ENCODE measurements at regions of chr2 and their contacts with region 1.

Region 1: GRCh38 chr2:224585205-224586088 is at the start of gene CUL3:
- DNase-seq: peak; percentile 100
- ATAC-seq: peak; percentile 86
- H3K4me3 Mint-ChIP-seq: peak within 1 kb of the TSS; percentile 95
- H3K27ac Mint-ChIP-seq: peak within 1 kb of the TSS; percentile 96
- H3K4me1 Mint-ChIP-seq: peaks cover 29% of the 10 kb centered on the region
- H3K27me3 Mint-ChIP-seq: no peaks in the 10 kb centered on the region
- total RNA-seq, gene CUL3: 77.6 to 85.8 TPM

Region 2: GRCh38 chr2:224025874-224026273 is 559.6 kb before region 1 on chr2:
- CTCF ChIA-PET with region 1: no interaction called
- POLR2A ChIA-PET with region 1: no interaction called
- intact Hi-C with region 1: loop called in 1 of 2 experiments (anchors 5 kb)
- DNase-seq: peak; percentile 81
- ATAC-seq: peak; percentile 94
- H3K4me3 Mint-ChIP-seq: peak overlapping the region; percentile 50
- H3K27ac Mint-ChIP-seq: peak overlapping the region; percentile 94
- H3K4me1 Mint-ChIP-seq: peaks cover 72% of the 10 kb centered on the region
- H3K27me3 Mint-ChIP-seq: no peaks in the 10 kb centered on the region

Region 3: GRCh38 chr2:224545884-224546644 is 39.4 kb before region 1 on chr2:
- CTCF ChIA-PET with region 1: interaction called, 5 read pairs
- POLR2A ChIA-PET with region 1: no interaction called
- intact Hi-C with region 1: loop called in 1 of 2 experiments (anchors 5 kb)
- DNase-seq: no peak
- ATAC-seq: peak; percentile 33
- H3K4me3 Mint-ChIP-seq: no peak overlapping the region
- H3K27ac Mint-ChIP-seq: no peak overlapping the region
- H3K4me1 Mint-ChIP-seq: peaks cover 40% of the 10 kb centered on the region
- H3K27me3 Mint-ChIP-seq: no peaks in the 10 kb centered on the region

Region 4: DNA sequence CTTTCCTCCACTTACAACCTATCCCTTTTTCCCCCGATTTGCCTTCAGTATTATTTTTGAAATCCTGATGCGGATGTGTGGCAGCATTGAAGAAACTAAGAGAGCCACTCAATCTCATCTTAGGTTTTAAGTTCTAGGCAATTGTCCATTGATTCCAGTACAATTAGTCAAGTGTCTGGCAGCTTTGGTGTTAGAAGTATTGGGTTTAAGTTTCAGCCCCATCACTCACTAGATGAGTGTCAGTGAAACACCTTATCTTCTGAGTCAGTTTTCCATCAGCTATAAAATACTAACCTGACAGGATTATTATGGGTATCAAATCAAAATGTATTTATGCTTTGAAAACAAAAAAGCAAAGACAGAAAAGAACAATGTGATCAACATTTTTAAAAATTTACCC is 16.5 kb after region 1 on chr2:
- CTCF ChIA-PET with region 1: interaction called, 4 read pairs
- POLR2A ChIA-PET with region 1: interaction called, 4 read pairs
- intact Hi-C with region 1: loop called in 1 of 2 experiments (anchors 1 kb)
- DNase-seq: no peak
- ATAC-seq: peak; percentile 89
- H3K4me3 Mint-ChIP-seq: no peak overlapping the region
- H3K27ac Mint-ChIP-seq: no peak overlapping the region
- H3K4me1 Mint-ChIP-seq: peaks cover 19% of the 10 kb centered on the region
- H3K27me3 Mint-ChIP-seq: peaks cover 2% of the 10 kb centered on the region

Region 5: GRCh38 chr2:224922142-224922727 is 336.8 kb after region 1 on chr2:
- CTCF ChIA-PET with region 1: no interaction called
- POLR2A ChIA-PET with region 1: no interaction called
- intact Hi-C with region 1: loop called (anchors 5 to 10 kb)
- DNase-seq: no peak
- ATAC-seq: no peak
- H3K4me3 Mint-ChIP-seq: no peak overlapping the region
- H3K27ac Mint-ChIP-seq: peak overlapping the region; percentile 85
- H3K4me1 Mint-ChIP-seq: peaks cover 59% of the 10 kb centered on the region
- H3K27me3 Mint-ChIP-seq: no peaks in the 10 kb centered on the region